ENCODE measurements at regions of chr10 and their contacts with region 1.

Region 1: DNA sequence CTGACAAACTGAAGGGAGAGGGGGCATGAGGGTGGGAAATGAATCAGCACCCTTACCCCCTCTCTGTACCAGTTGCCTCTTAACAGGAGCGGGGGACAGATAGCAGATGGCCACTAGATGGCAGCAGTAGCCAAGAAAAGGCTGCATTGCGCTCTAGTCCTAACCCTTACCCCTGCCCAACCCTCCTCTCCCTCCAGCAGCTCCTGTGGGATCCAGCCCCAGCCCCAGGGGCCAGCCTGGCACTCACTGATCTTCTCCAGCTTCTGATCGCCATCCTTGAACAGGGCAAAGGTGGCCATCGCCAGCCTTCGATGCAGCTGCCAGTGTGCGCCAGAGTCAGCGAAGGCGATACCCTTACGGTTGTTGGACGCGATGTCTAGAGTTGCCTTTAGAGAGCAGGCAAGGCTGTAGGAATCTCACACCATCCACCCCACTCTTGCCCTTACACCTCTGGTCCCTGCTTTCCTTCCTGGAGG is 2.2 kb downstream of the CYP17A1 start:
- DNase-seq: peak; percentile 85
- ATAC-seq: peak; percentile 97
- H3K4me3 Mint-ChIP-seq: no peak overlapping the region
- H3K27ac Mint-ChIP-seq: no peak overlapping the region
- H3K4me1 Mint-ChIP-seq: peaks cover 3% of the 10 kb centered on the region
- H3K27me3 Mint-ChIP-seq: no peaks in the 10 kb centered on the region
- CTCF ChIP-seq: peak; percentile 89

Region 2: DNA sequence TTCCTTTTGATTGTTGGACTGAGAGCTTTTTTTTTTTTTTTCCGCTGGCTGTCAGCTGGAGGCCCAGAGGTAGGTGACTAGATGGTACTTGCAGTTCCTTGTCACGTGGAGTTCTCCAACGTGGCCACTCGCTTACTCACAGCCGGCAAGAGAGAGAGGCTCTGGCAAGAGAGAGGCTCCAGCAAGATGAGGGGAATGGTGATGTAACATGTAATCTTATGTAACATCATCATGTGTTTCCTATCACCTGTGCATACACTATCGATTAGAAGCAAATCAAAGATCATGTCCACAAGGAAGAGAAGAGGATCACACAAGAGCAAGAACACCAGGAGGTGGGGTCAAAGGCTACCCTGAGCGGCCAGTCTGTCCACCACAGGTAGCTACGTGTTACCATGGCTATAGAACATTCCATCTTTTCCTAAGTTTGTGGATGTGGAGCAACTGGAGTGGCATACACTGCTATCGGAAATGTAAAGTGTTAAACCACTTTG is 15.0 kb after region 1 on chr10:
- CTCF ChIA-PET with region 1: interaction called, 10 read pairs
- POLR2A ChIA-PET with region 1: no interaction called
- intact Hi-C with region 1: no loop called
- DNase-seq: no peak
- ATAC-seq: no peak
- H3K4me3 Mint-ChIP-seq: no peak overlapping the region
- H3K27ac Mint-ChIP-seq: no peak overlapping the region
- H3K4me1 Mint-ChIP-seq: peaks cover 2% of the 10 kb centered on the region
- H3K27me3 Mint-ChIP-seq: no peaks in the 10 kb centered on the region
- CTCF ChIP-seq: no peak

Region 3: DNA sequence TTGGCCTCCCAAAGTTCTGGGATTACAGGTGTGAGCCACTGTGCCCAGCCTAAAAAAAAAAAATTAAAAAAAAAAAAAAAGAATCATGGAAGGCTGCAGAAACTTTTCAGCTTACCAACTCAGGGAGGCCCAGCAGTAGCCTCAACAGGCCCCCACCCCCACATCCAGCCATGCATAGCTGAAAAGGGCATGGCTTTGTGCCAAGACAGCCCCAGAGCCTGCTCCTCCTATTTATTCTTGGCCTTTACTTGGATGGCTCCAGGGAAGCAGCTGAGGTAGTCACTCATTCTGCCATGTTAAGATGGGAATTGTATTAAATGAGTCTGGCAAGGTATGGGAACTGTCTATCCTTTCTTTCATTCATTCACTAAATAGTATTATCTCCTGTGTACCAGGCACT is 69.3 kb after region 1 on chr10:
- CTCF ChIA-PET with region 1: interaction called, 71 read pairs
- POLR2A ChIA-PET with region 1: no interaction called
- intact Hi-C with region 1: loop called (anchors 5 kb)
- DNase-seq: no peak
- ATAC-seq: no peak
- H3K4me3 Mint-ChIP-seq: no peak overlapping the region
- H3K27ac Mint-ChIP-seq: no peak overlapping the region
- H3K4me1 Mint-ChIP-seq: no peaks in the 10 kb centered on the region
- H3K27me3 Mint-ChIP-seq: no peaks in the 10 kb centered on the region
- CTCF ChIP-seq: no peak

Region 4: DNA sequence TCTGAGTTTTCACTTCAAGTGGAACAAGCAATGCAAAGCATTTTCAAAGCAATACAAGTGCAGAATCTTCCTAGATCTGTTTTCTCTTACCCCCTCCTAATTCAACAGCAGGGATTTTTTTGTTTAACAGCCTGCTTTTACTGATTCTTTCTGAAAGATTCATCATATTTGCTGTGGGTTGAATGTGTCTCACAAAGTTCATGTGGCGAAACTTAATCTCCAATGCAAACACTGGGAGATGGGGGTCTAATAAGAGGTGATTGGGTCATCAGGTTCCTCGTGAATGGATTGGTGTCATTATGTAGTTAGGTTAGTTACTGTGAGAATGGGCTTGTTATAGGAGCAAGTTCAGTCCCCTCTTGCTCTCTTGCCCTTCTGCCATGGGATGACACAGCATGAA is 190.7 kb after region 1 on chr10:
- CTCF ChIA-PET with region 1: no interaction called
- POLR2A ChIA-PET with region 1: no interaction called
- intact Hi-C with region 1: no loop called
- DNase-seq: no peak
- ATAC-seq: no peak
- H3K4me3 Mint-ChIP-seq: no peak overlapping the region
- H3K27ac Mint-ChIP-seq: no peak overlapping the region
- H3K4me1 Mint-ChIP-seq: no peaks in the 10 kb centered on the region
- H3K27me3 Mint-ChIP-seq: no peaks in the 10 kb centered on the region
- CTCF ChIP-seq: no peak

Region 5: GRCh38 chr10:103069453-103070331 is 234.6 kb after region 1 on chr10:
- CTCF ChIA-PET with region 1: interaction called, 6 read pairs
- POLR2A ChIA-PET with region 1: no interaction called
- intact Hi-C with region 1: loop called (anchors 5 kb)
- DNase-seq: peak; percentile 84
- ATAC-seq: peak; percentile 76
- H3K4me3 Mint-ChIP-seq: no peak overlapping the region
- H3K27ac Mint-ChIP-seq: peak overlapping the region; percentile 29
- H3K4me1 Mint-ChIP-seq: peaks cover 23% of the 10 kb centered on the region
- H3K27me3 Mint-ChIP-seq: no peaks in the 10 kb centered on the region
- CTCF ChIP-seq: peak; percentile 74